Mammary epithelial cell (primary cell): ENCODE measurements at regions of chr11 and their contacts with region 1.

Region 1: DNA sequence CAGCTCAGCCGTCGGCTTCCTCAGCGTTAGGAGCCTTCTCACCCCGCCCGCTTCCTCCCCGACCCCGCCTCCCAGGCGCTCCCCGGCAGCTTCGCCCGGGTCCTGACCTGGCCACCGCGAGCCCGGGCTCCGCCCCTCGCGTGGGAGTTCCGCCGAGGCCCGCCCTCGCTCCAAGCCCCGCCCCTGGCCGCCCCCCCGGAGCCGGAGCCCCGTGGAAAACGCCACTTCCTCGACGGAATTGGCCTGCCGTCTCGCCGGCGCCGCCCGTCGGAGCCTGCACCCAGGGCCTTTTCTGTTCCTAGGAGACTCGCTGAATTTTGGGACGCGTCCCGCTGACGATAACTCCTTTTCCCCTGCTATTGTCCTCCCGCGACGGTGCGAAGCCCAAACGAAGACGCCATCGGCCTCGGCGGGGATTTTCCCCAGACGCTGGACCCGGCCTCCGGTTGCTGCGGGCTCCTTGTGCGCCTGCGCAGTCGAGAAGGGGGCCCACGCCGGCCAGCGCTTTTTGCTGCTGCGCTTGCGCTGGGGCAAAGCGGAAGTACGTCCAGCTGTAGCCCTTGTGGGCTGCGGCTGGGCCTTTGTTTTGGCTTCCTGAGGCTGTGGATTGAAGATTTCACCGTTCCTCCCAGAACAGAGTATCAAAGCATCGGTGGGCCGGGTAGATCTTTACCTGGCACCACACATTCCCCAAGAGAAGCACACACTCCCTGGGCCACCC is 10.0 kb downstream of the RELA start:
- DNase-seq: peak; percentile 77
- H3K4me3 ChIP-seq: peak overlapping the region; percentile 26 to 58 (median 47)
- H3K27ac ChIP-seq: peak overlapping the region; percentile 47
- H3K4me1 ChIP-seq: peaks cover 45% of the 10 kb centered on the region
- H3K27me3 ChIP-seq: no peaks in the 10 kb centered on the region
- CTCF ChIP-seq: no peak

Region 2: DNA sequence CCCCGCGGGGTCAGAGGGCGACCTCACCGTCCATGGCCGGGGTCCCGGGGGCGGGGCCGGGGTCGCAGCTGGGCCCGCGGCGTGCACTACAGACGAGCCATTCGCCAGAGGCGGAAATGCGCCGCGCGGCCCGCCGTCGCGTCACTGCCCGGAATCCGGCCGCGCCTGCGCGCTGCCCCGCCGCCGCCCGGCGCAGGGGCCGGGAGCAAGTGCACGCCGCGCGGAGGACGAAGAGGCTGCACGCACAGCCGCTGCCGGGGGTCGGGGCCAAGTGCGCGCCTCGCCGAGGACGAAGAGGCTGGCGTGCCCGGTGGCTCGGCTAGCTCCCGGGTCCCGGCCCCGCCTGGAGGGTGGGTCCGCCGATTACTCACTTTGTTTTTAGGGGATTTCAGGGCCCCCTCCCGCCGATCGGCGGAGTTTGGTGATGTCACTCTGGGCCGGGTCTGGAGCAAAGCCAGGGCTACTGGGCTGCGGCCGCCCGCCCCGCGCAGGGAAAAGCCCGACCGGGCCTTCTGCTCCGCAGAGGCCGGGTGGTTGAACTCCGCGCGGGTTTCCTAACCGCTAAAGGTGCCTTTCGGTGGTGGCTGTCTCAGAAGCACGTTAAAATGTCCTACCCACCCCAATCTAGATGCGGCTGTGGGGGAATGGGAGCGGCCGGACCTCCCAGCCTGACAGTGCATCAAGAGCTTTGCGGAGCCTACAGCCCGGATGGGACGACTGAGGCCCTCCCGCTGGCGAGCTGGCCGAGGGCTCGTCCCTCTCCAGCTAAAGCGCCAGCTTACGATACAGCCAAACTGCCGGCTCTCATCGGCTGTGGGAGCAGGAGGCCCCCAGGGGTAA is 10.3 kb after region 1 on chr11 and contains the start of gene RELA:
- CTCF ChIA-PET with region 1: interaction called, 3 read pairs
- dilution Hi-C with region 1: no loop called
- in situ Hi-C with region 1: no loop called
- intact Hi-C with region 1: loop called (anchors 1 kb)
- DNase-seq: peak; percentile 95
- H3K4me3 ChIP-seq: peak within 1 kb of the TSS; percentile 83 to 94 (median 86)
- H3K27ac ChIP-seq: peak within 1 kb of the TSS; percentile 82
- H3K4me1 ChIP-seq: peaks cover 17% of the 10 kb centered on the region
- H3K27me3 ChIP-seq: no peaks in the 10 kb centered on the region
- CTCF ChIP-seq: no peak
- total RNA-seq, gene RELA: 23.7 to 79.0 TPM

Region 3: GRCh38 chr11:65685981-65686380 is 33.3 kb after region 1 on chr11:
- CTCF ChIA-PET with region 1: no interaction called
- dilution Hi-C with region 1: no loop called
- in situ Hi-C with region 1: no loop called
- intact Hi-C with region 1: no loop called
- DNase-seq: no peak
- H3K4me3 ChIP-seq: no peak overlapping the region
- H3K27ac ChIP-seq: no peak overlapping the region
- H3K4me1 ChIP-seq: no peaks in the 10 kb centered on the region
- H3K27me3 ChIP-seq: no peaks in the 10 kb centered on the region
- CTCF ChIP-seq: no peak